Endothelial cell of umbilical vein (primary cell): ENCODE measurements at regions of chr19 and their contacts with region 1.

Region 1: DNA sequence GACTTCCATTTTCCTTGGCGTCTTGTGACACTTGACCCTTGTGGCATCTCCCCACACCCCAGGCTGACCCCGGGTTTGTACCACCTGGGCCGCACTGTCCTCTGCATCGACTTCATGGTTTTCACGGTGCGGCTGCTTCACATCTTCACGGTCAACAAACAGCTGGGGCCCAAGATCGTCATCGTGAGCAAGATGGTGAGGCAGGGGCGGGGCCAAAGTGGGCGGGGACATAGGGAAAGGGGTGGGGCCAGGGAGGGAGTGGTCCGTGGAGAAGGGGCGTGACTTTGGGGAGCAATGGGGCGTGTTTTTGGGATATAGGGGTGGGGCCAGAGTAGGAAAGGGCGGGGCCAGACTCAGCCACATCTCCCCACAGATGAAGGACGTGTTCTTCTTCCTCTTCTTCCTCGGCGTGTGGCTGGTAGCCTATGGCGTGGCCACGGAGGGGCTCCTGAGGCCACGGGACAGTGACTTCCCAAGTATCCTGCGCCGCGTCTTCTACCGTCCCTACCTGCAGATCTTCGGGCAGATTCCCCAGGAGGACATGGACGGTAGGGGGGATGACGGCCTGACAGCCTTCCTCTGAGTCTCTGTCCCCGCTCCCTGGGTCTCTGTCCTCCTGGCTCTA is 42.8 kb downstream of the TRPM4 start:
- DNase-seq: no peak
- H3K4me3 ChIP-seq: no peak overlapping the region
- H3K27ac ChIP-seq: no peak overlapping the region
- H3K4me1 ChIP-seq: peaks cover 9% of the 10 kb centered on the region
- H3K27me3 ChIP-seq: no peaks in the 10 kb centered on the region
- CTCF ChIP-seq: no peak
- POLR2A ChIP-seq: no peak

Region 2: GRCh38 chr19:49073514-49074378 is 126.6 kb before region 1 on chr19:
- CTCF ChIA-PET with region 1: interaction called, 15 read pairs
- POLR2A ChIA-PET with region 1: no interaction called
- dilution Hi-C with region 1: no loop called
- intact Hi-C with region 1: no loop called
- DNase-seq: no peak
- H3K4me3 ChIP-seq: no peak overlapping the region
- H3K27ac ChIP-seq: no peak overlapping the region
- H3K4me1 ChIP-seq: no peaks in the 10 kb centered on the region
- H3K27me3 ChIP-seq: peaks cover 22 to 24% of the 10 kb centered on the region in 2 experiments
- CTCF ChIP-seq: peak in 1 of 2 donors; percentile 8
- POLR2A ChIP-seq: no peak

Region 3: DNA sequence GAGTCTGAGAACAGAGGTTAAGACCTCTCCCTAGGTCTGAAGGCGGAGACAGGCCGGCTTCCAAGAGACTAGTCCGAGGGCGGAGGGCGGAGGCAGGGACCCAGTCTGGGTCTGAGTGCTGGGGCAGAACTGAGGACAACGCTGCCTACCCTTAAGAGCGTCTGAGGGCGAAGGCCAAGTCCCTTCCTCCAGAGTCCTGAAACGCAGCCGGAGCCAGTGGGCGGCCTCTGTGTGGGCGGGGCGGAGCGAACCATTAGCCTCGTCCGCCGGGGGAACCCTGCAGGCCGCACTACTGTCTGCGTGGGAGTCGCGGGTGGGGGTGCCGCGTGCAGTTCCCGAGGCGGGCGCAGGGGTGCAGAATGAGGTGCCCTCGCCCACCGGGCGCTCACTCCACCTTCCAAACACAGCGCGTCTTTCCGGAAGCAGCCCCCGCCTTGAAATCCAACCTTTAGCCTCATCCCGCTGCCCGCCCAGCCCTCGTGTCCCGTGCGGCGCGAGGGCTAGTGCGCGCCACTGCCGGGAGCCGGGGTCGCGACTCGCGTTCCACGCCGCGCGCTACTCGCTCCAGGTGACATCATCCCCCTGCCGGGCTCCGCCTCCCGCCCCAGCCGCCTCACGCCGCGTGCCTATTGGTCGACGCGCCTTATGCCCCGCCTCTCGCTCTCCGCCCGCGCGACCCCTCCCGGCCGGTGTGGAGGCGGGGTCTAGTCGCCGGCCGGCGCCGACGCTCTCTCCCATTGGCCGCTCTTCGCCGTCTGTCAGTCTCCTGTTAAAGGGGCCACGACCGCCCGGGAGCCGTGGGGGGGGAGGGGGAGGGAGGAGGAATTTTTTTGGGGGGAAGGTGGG is 81.6 kb before region 1 on chr19 and contains the start of gene C19orf73:
- CTCF ChIA-PET with region 1: interaction called, 60 read pairs
- POLR2A ChIA-PET with region 1: no interaction called
- dilution Hi-C with region 1: no loop called
- intact Hi-C with region 1: loop called (anchors 5 kb)
- DNase-seq: peak; percentile 94
- H3K4me3 ChIP-seq: peak within 1 kb of the TSS; percentile 16 to 65 (median 57)
- H3K27ac ChIP-seq: peak within 1 kb of the TSS; percentile 63
- H3K4me1 ChIP-seq: peaks cover 14% of the 10 kb centered on the region
- H3K27me3 ChIP-seq: peaks cover 4 to 8% of the 10 kb centered on the region in 2 experiments
- CTCF ChIP-seq: peak in 1 of 2 donors; percentile 7
- POLR2A ChIP-seq: peak; percentile 53
- total RNA-seq, gene C19orf73: 1.5 TPM in 1 of 2 replicates, not detected in the other

Region 4: DNA sequence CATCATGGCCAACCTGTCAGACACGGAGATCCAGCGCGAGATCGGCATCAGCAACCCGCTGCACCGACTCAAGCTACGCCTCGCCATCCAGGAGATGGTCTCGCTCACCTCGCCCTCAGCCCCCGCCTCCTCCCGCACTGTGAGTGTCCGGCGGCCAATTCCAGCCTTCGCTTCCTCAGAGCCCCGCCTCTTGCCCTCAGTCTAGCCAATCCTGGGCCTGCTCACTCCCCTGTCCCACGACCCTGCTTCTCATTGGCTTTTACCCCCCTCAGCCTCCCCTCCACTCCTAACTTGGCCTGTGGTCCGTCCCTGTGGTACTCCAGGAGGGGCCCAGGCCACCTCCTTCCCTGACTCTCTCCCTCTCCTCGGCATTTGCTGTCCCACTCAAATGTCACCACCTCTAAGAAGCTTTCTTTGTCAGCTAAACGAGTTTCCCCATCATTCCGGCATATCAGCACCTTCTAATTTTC is 57.4 kb before region 1 on chr19:
- CTCF ChIA-PET with region 1: interaction called, 56 read pairs
- POLR2A ChIA-PET with region 1: no interaction called
- dilution Hi-C with region 1: no loop called
- intact Hi-C with region 1: no loop called
- DNase-seq: peak; percentile 92
- H3K4me3 ChIP-seq: peak overlapping the region in 2 of 3 experiments; percentile 31 to 47
- H3K27ac ChIP-seq: no peak overlapping the region
- H3K4me1 ChIP-seq: peaks cover 5% of the 10 kb centered on the region
- H3K27me3 ChIP-seq: peaks cover 0 to 4% of the 10 kb centered on the region in 2 experiments
- CTCF ChIP-seq: no peak
- POLR2A ChIP-seq: peak; percentile 54

Region 5: DNA sequence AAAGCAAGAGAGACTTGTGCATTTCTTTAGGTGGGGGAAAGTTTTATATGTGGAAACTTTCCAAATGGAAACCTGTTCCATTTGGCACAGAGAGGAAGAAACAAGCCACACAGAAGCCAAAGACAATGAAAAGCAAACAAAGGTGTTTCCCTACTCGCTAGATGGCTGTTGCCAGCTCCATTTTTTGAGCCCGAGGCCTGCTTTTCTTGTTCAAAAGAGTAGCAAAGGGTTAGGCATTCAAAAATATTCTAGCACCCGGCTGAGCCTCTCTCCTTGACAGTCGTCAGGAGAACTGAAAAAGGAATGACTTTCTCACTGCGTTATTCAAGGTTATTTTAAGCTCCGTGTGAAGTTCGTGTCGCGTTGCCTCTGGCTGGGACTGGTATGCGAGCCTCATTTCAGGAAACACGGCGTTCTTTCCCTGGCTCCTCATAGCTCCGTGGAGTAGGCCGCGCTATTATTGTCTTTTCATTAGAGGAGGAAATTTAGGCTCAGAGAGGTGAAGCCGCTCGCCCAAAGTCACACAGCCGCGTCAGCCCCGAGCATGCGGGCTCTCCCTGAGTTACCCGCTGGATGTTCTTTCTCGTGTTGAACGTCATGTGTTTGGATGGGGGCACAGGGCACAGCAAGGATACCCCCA is 35.1 kb before region 1 on chr19:
- CTCF ChIA-PET with region 1: interaction called, 33 read pairs
- POLR2A ChIA-PET with region 1: no interaction called
- dilution Hi-C with region 1: no loop called
- intact Hi-C with region 1: no loop called
- DNase-seq: peak; percentile 85
- H3K4me3 ChIP-seq: no peak overlapping the region
- H3K27ac ChIP-seq: peak overlapping the region; percentile 47
- H3K4me1 ChIP-seq: peaks cover 12% of the 10 kb centered on the region
- H3K27me3 ChIP-seq: no peaks in the 10 kb centered on the region
- CTCF ChIP-seq: no peak
- POLR2A ChIP-seq: no peak

Region 6: DNA sequence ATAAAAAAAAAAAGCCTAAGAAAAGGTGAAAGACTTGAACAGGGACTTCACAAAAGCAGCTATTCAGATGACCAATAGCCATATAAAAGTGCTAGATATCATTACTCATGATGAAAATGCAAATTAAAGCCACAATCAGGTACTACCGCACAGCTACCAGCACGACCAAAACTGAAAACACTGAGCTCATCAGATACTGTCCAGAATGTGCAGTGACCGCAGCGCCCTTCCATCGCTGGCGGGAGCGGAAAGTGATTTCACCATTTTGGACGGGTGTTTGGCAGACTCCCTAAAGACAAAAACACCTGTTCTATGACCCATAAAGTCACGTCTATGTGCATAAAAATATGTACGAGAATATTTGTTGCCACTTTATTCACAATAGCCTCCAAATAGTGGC is 63.9 kb after region 1 on chr19:
- CTCF ChIA-PET with region 1: no interaction called
- POLR2A ChIA-PET with region 1: no interaction called
- dilution Hi-C with region 1: no loop called
- intact Hi-C with region 1: no loop called
- DNase-seq: no peak
- H3K4me3 ChIP-seq: no peak overlapping the region
- H3K27ac ChIP-seq: no peak overlapping the region
- H3K4me1 ChIP-seq: no peaks in the 10 kb centered on the region
- H3K27me3 ChIP-seq: no peaks in the 10 kb centered on the region
- CTCF ChIP-seq: no peak
- POLR2A ChIP-seq: no peak

Region 7: GRCh38 chr19:49301165-49301865 is 101.0 kb after region 1 on chr19:
- CTCF ChIA-PET with region 1: no interaction called
- POLR2A ChIA-PET with region 1: no interaction called
- dilution Hi-C with region 1: no loop called
- intact Hi-C with region 1: no loop called
- DNase-seq: peak; percentile 64
- H3K4me3 ChIP-seq: no peak overlapping the region
- H3K27ac ChIP-seq: no peak overlapping the region
- H3K4me1 ChIP-seq: no peaks in the 10 kb centered on the region
- H3K27me3 ChIP-seq: peaks cover 0 to 5% of the 10 kb centered on the region in 2 experiments
- CTCF ChIP-seq: peak; percentile 93 to 94
- POLR2A ChIP-seq: no peak